ENCODE measurements at regions of chrX and their contacts with region 1.

Region 1: DNA sequence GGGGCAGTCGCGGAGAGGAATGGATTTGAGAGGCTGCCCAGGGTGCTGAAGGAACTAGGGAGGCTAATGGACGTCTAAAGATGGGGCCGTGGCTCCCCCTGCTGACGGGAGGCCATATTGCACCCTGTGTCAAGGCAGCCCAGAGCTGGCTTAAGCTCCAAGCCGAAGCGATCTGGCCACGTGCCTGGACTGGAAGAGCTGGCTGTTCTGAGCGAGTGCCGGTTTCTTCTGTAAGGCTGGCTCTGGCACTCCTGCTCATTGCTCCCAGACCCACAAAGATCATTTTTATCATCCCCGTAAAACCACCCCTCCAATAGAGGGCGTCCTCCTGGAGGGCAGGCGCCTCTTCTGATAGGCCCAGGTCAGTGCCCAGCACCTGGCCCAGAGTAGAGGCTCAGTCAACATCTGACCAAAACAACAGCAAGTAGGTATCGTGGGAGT is 5.6 kb downstream of the PNCK start:
- DNase-seq: peak; percentile 85 to 94 (median 91)
- H3K4me3 ChIP-seq: peak overlapping the region in 44 of 59 donors; percentile 4 to 53 (median 33)
- H3K27ac ChIP-seq: peak overlapping the region in 37 of 59 donors; percentile 7 to 78 (median 54)
- H3K27me3 ChIP-seq: peaks cover 0 to 64% (median 18%) of the 10 kb centered on the region in 45 donors
- CTCF ChIP-seq: peak; percentile 46 to 89 (median 79)

Region 2: DNA sequence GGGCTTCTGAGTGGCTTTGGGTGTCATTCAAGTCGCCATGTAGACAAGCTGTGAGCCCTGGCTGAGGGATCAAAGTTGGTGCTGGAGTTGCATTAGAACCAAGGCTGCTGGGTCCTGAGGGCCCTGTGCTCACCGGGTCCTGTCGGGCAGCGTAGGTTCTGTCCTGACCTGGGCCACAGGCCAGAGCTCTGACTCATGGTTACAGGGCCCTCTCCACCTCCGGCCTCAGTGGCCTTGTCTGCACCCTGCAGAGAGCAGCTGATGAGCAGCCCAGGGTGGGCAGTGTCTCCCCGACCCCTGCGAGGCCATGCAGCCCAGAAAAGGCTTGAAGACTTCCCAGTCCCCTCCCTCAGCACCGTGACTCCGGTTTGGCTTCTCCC is 128.0 kb before region 1 on chrX:
- intact Hi-C with region 1: loop called (anchors 5 kb)
- DNase-seq: no peak
- H3K4me3 ChIP-seq: no peak overlapping the region
- H3K27ac ChIP-seq: peak overlapping the region in 2 of 59 donors; percentile 7 to 52
- H3K27me3 ChIP-seq: peaks cover 0 to 86% (median 7%) of the 10 kb centered on the region in 45 donors
- CTCF ChIP-seq: no peak

Region 3: DNA sequence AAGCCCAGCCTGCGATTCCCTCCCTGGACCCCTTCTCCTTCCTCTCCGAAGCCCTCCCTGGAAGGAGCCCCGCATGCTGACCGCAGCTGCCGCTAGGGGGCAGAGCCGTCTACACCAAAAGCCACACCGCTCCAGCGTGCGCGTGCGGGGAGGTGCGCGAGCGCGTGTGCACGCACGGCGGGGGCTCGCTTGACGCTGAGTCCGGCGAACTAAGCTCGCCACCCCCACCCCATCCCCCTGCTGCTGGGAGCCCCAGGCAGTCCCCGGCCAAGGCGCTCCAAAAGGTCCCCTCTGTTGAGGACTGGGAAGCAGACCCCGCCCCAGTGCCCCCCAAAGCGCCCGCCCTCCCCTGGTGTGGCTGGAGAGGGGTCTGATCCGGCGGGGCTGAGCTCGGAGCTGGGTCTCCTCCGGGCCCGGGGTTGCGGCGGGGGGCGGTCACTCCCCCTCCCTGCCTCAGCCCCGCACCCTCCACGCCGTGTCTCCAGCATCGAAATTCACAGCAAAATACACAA is 58.0 kb before region 1 on chrX:
- intact Hi-C with region 1: loop called (anchors 1 to 5 kb)
- DNase-seq: peak; percentile 67 to 85 (median 80)
- H3K4me3 ChIP-seq: peak overlapping the region; percentile 31 to 69 (median 52)
- H3K27ac ChIP-seq: peak overlapping the region in 56 of 59 donors; percentile 29 to 90 (median 78)
- H3K27me3 ChIP-seq: peaks cover 0 to 63% (median 8%) of the 10 kb centered on the region in 45 donors
- CTCF ChIP-seq: peak; percentile 61 to 90 (median 77)

Region 4: GRCh38 chrX:153875391-153876111 is 207.6 kb after region 1 on chrX:
- intact Hi-C with region 1: no loop called
- DNase-seq: peak in 6 of 10 donors; percentile 29 to 76 (median 48)
- H3K4me3 ChIP-seq: peak overlapping the region in 51 of 59 donors; percentile 5 to 60 (median 41)
- H3K27ac ChIP-seq: peak overlapping the region in 16 of 59 donors; percentile 18 to 71 (median 42)
- H3K27me3 ChIP-seq: peaks cover 0 to 88% (median 39%) of the 10 kb centered on the region in 45 donors
- CTCF ChIP-seq: peak in 1 of 56 donors; percentile 14